ENCODE measurements at regions of chr11 and their contacts with region 1.

Region 1: GRCh38 chr11:94493281-94494125 is at the starts of genes ANKRD49 and MRE11:
- DNase-seq: peak; percentile 91 to 99 (median 96)
- ATAC-seq: peak; percentile 99
- H3K4me3 ChIP-seq: peak within 1 kb of the TSS; percentile 57 to 97
- H3K4me3 Mint-ChIP-seq: peak within 1 kb of the TSS; percentile 95
- H3K27ac ChIP-seq: peak within 1 kb of the TSS; percentile 72 to 94
- H3K27ac Mint-ChIP-seq: peak within 1 kb of the TSS; percentile 99
- H3K4me1 ChIP-seq: peaks cover 33% of the 10 kb centered on the region
- H3K4me1 Mint-ChIP-seq: peaks cover 50% of the 10 kb centered on the region
- H3K27me3 ChIP-seq: no peaks in the 10 kb centered on the region
- H3K27me3 Mint-ChIP-seq: no peaks in the 10 kb centered on the region
- CTCF ChIP-seq: no peak
- total RNA-seq, gene ANKRD49: 45.6 to 50.9 TPM
- total RNA-seq, gene MRE11: 12.3 to 14.7 TPM

Region 2: GRCh38 chr11:93197380-93198214 is 1295.9 kb before region 1 on chr11 and contains the start of gene SLC36A4:
- CTCF ChIA-PET with region 1: no interaction called
- POLR2A ChIA-PET with region 1: no interaction called
- intact Hi-C with region 1: loop called (anchors 2 kb)
- DNase-seq: peak; percentile 70 to 94 (median 86)
- ATAC-seq: peak; percentile 88
- H3K4me3 ChIP-seq: peak within 1 kb of the TSS; percentile 69 to 85
- H3K4me3 Mint-ChIP-seq: peak within 1 kb of the TSS; percentile 97
- H3K27ac ChIP-seq: peak within 1 kb of the TSS; percentile 72 to 93
- H3K27ac Mint-ChIP-seq: peak within 1 kb of the TSS; percentile 96
- H3K4me1 ChIP-seq: peaks cover 6% of the 10 kb centered on the region
- H3K4me1 Mint-ChIP-seq: peaks cover 31% of the 10 kb centered on the region
- H3K27me3 ChIP-seq: no peaks in the 10 kb centered on the region
- H3K27me3 Mint-ChIP-seq: no peaks in the 10 kb centered on the region
- CTCF ChIP-seq: no peak
- total RNA-seq, gene SLC36A4: 16.8 to 17.6 TPM

Region 3: DNA sequence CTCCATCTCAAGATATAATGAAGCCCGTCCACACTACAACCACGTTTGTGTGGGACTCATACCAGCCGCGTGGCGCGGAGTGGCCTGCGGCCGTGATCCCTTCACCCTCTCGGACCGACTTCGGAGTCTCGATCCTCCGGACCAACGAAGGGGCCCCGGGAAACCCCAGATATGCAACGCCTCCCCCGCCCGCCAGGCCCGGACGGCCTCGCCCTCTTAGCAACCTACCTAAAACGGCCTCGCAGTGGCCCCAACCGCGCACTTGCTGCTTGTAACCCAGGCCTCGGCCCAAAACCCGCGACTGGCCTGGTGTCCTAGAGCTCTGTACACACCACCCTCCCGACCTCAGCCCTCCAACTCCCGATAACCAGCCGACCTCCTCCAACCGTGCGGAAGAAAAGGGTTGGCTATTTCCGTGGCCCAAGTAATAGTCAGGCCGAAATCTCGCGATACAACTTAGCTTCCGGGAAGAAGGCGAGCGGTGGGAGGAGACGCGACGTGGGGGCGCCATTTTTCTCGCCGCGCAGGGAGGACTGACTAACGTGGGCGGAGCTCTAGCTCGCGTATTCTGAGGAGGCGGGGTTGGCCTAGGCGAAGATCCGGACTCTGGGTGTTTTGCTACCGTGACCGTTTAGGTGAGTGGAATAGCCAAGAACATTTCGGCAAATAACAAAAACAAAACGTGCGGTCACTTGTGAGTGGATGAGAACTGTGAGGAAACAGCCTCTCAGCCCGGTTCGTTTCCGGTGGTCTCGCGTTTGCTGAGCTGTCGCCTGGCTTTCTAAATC is 752.2 kb before region 1 on chr11 and contains the starts of genes C11orf54 and TAF1D:
- CTCF ChIA-PET with region 1: no interaction called
- POLR2A ChIA-PET with region 1: no interaction called
- intact Hi-C with region 1: loop called (anchors 1 to 2 kb)
- DNase-seq: peak; percentile 92 to 99 (median 96)
- ATAC-seq: peak; percentile 91
- H3K4me3 ChIP-seq: peak within 1 kb of the TSS; percentile 81 to 99
- H3K4me3 Mint-ChIP-seq: peak within 1 kb of the TSS; percentile 100
- H3K27ac ChIP-seq: peak within 1 kb of the TSS; percentile 89 to 95
- H3K27ac Mint-ChIP-seq: peak within 1 kb of the TSS; percentile 100
- H3K4me1 ChIP-seq: peaks cover 46% of the 10 kb centered on the region
- H3K4me1 Mint-ChIP-seq: peaks cover 69% of the 10 kb centered on the region
- H3K27me3 ChIP-seq: no peaks in the 10 kb centered on the region
- H3K27me3 Mint-ChIP-seq: no peaks in the 10 kb centered on the region
- CTCF ChIP-seq: no peak
- total RNA-seq, gene C11orf54: 7.7 to 9.4 TPM
- total RNA-seq, gene TAF1D: 167 to 190 TPM

Region 4: GRCh38 chr11:93796441-93797231 is 696.9 kb before region 1 on chr11:
- CTCF ChIA-PET with region 1: no interaction called
- POLR2A ChIA-PET with region 1: no interaction called
- intact Hi-C with region 1: loop called in 1 of 2 experiments (anchors 5 kb)
- DNase-seq: no peak
- ATAC-seq: no peak
- H3K4me3 ChIP-seq: no peak overlapping the region
- H3K4me3 Mint-ChIP-seq: no peak overlapping the region
- H3K27ac ChIP-seq: no peak overlapping the region
- H3K27ac Mint-ChIP-seq: no peak overlapping the region
- H3K4me1 ChIP-seq: no peaks in the 10 kb centered on the region
- H3K4me1 Mint-ChIP-seq: peaks cover 10% of the 10 kb centered on the region
- H3K27me3 ChIP-seq: no peaks in the 10 kb centered on the region
- H3K27me3 Mint-ChIP-seq: no peaks in the 10 kb centered on the region
- CTCF ChIP-seq: no peak

Region 5: GRCh38 chr11:94169930-94170545 is 323.5 kb before region 1 on chr11:
- CTCF ChIA-PET with region 1: no interaction called
- POLR2A ChIA-PET with region 1: no interaction called
- intact Hi-C with region 1: no loop called
- DNase-seq: no peak
- ATAC-seq: no peak
- H3K4me3 ChIP-seq: no peak overlapping the region
- H3K4me3 Mint-ChIP-seq: no peak overlapping the region
- H3K27ac ChIP-seq: no peak overlapping the region
- H3K27ac Mint-ChIP-seq: no peak overlapping the region
- H3K4me1 ChIP-seq: no peaks in the 10 kb centered on the region
- H3K4me1 Mint-ChIP-seq: peaks cover 34% of the 10 kb centered on the region
- H3K27me3 ChIP-seq: no peaks in the 10 kb centered on the region
- H3K27me3 Mint-ChIP-seq: no peaks in the 10 kb centered on the region
- CTCF ChIP-seq: no peak

Region 6: GRCh38 chr11:94504689-94505293 is 11.3 kb after region 1 on chr11:
- CTCF ChIA-PET with region 1: interaction called, 4 read pairs
- POLR2A ChIA-PET with region 1: no interaction called
- intact Hi-C with region 1: loop called in 1 of 2 experiments (anchors 1 kb)
- DNase-seq: peak in 2 of 9 experiments; percentile 67 to 72
- ATAC-seq: peak; percentile 59
- H3K4me3 ChIP-seq: no peak overlapping the region
- H3K4me3 Mint-ChIP-seq: no peak overlapping the region
- H3K27ac ChIP-seq: no peak overlapping the region
- H3K27ac Mint-ChIP-seq: no peak overlapping the region
- H3K4me1 ChIP-seq: no peaks in the 10 kb centered on the region
- H3K4me1 Mint-ChIP-seq: peaks cover 1% of the 10 kb centered on the region
- H3K27me3 ChIP-seq: no peaks in the 10 kb centered on the region
- H3K27me3 Mint-ChIP-seq: peaks cover 3% of the 10 kb centered on the region
- CTCF ChIP-seq: peak; percentile 87

Region 7: GRCh38 chr11:94543695-94544645 is 50.5 kb after region 1 on chr11 and contains the start of gene FUT4:
- CTCF ChIA-PET with region 1: interaction called, 3 read pairs
- POLR2A ChIA-PET with region 1: no interaction called
- intact Hi-C with region 1: loop called (anchors 1 kb)
- DNase-seq: peak; percentile 26 to 82 (median 69)
- ATAC-seq: peak; percentile 76
- H3K4me3 ChIP-seq: peak within 1 kb of the TSS; percentile 65 to 77
- H3K4me3 Mint-ChIP-seq: peak within 1 kb of the TSS; percentile 99
- H3K27ac ChIP-seq: peak within 1 kb of the TSS; percentile 87 to 90
- H3K27ac Mint-ChIP-seq: peak within 1 kb of the TSS; percentile 100
- H3K4me1 ChIP-seq: peaks cover 22% of the 10 kb centered on the region
- H3K4me1 Mint-ChIP-seq: peaks cover 39% of the 10 kb centered on the region
- H3K27me3 ChIP-seq: no peaks in the 10 kb centered on the region
- H3K27me3 Mint-ChIP-seq: no peaks in the 10 kb centered on the region
- CTCF ChIP-seq: no peak
- total RNA-seq, gene FUT4: 4.7 to 5.2 TPM

Region 8: DNA sequence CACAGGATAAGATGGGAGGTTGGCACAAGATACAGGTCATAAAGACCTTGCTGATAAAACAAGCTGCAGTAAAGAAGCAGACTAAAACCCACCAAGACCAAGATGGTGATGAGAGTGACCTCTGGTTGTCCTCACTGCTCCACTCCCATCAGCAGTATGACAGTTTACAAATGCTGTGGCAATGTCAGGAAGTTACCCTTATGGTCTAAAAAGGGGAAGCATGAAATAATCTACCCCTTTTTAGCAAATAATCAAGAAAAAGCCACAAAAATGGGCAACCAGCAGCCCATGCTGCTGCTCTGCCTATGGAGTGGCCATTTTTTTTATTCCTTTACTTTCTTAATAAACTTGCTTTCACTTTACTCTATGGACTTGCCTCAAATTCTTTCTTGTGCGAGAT is 65.0 kb after region 1 on chr11:
- CTCF ChIA-PET with region 1: no interaction called
- POLR2A ChIA-PET with region 1: no interaction called
- intact Hi-C with region 1: no loop called
- DNase-seq: no peak
- ATAC-seq: no peak
- H3K4me3 ChIP-seq: no peak overlapping the region
- H3K4me3 Mint-ChIP-seq: no peak overlapping the region
- H3K27ac ChIP-seq: no peak overlapping the region
- H3K27ac Mint-ChIP-seq: no peak overlapping the region
- H3K4me1 ChIP-seq: no peaks in the 10 kb centered on the region
- H3K4me1 Mint-ChIP-seq: no peaks in the 10 kb centered on the region
- H3K27me3 ChIP-seq: no peaks in the 10 kb centered on the region
- H3K27me3 Mint-ChIP-seq: no peaks in the 10 kb centered on the region
- CTCF ChIP-seq: no peak

Region 9: GRCh38 chr11:94583866-94584500 is 90.5 kb after region 1 on chr11:
- CTCF ChIA-PET with region 1: no interaction called
- POLR2A ChIA-PET with region 1: no interaction called
- intact Hi-C with region 1: no loop called
- DNase-seq: peak in 1 of 9 experiments; percentile 33
- ATAC-seq: no peak
- H3K4me3 ChIP-seq: no peak overlapping the region
- H3K4me3 Mint-ChIP-seq: no peak overlapping the region
- H3K27ac ChIP-seq: no peak overlapping the region
- H3K27ac Mint-ChIP-seq: no peak overlapping the region
- H3K4me1 ChIP-seq: no peaks in the 10 kb centered on the region
- H3K4me1 Mint-ChIP-seq: no peaks in the 10 kb centered on the region
- H3K27me3 ChIP-seq: no peaks in the 10 kb centered on the region
- H3K27me3 Mint-ChIP-seq: no peaks in the 10 kb centered on the region
- CTCF ChIP-seq: no peak

Region 10: GRCh38 chr11:95790123-95790932 is 1296.8 kb after region 1 on chr11 and contains the start of gene CEP57:
- CTCF ChIA-PET with region 1: no interaction called
- POLR2A ChIA-PET with region 1: no interaction called
- intact Hi-C with region 1: loop called (anchors 1 to 5 kb)
- DNase-seq: peak; percentile 80 to 98 (median 94)
- ATAC-seq: peak; percentile 54
- H3K4me3 ChIP-seq: peak within 1 kb of the TSS; percentile 86 to 93
- H3K4me3 Mint-ChIP-seq: peak within 1 kb of the TSS; percentile 99
- H3K27ac ChIP-seq: peak within 1 kb of the TSS; percentile 99 to 100
- H3K27ac Mint-ChIP-seq: peak within 1 kb of the TSS; percentile 100
- H3K4me1 ChIP-seq: peaks cover 29% of the 10 kb centered on the region
- H3K4me1 Mint-ChIP-seq: peaks cover 63% of the 10 kb centered on the region
- H3K27me3 ChIP-seq: no peaks in the 10 kb centered on the region
- H3K27me3 Mint-ChIP-seq: no peaks in the 10 kb centered on the region
- CTCF ChIP-seq: no peak
- total RNA-seq, gene CEP57: 53.2 to 53.7 TPM